ENCODE measurements at regions of chr4 and their contacts with region 1.

Region 1: GRCh38 chr4:150799207-150799606 is 215.9 kb downstream of the LRBA start:
- DNase-seq: no peak
- ATAC-seq: no peak
- H3K4me3 ChIP-seq: no peak overlapping the region
- H3K4me3 Mint-ChIP-seq: no peak overlapping the region
- H3K27ac ChIP-seq: no peak overlapping the region
- H3K27ac Mint-ChIP-seq: no peak overlapping the region
- H3K4me1 ChIP-seq: no peaks in the 10 kb centered on the region
- H3K4me1 Mint-ChIP-seq: peaks cover 0 to under 1% (median under 1%) of the 10 kb centered on the region in 3 donors
- H3K27me3 ChIP-seq: no peaks in the 10 kb centered on the region
- H3K27me3 Mint-ChIP-seq: no peaks in the 10 kb centered on the region

Region 2: DNA sequence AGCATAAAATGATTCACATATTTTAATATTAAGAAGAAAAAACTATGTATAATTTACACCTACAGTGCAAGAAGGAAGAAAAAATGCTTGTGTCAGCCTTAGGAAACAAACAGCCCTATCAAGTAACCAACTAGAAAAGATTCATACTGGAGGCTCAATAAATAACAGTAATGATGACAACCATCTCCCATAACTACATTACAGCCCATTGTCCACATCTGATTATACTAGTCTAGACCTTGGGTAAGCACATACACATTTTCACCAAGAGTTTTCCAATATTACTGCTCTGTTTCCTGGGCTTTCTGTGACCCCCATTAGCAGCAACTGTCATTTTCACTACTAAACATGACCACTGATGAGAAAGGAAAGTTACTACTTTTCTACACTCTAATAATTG is 47.6 kb before region 1 on chr4:
- CTCF ChIA-PET with region 1: no interaction called
- POLR2A ChIA-PET with region 1: interaction called in 1 of 2 experiments, 11 read pairs
- DNase-seq: no peak
- ATAC-seq: no peak
- H3K4me3 ChIP-seq: no peak overlapping the region
- H3K4me3 Mint-ChIP-seq: no peak overlapping the region
- H3K27ac ChIP-seq: no peak overlapping the region
- H3K27ac Mint-ChIP-seq: no peak overlapping the region
- H3K4me1 ChIP-seq: no peaks in the 10 kb centered on the region
- H3K4me1 Mint-ChIP-seq: peaks cover 0 to 6% (median 4%) of the 10 kb centered on the region in 3 donors
- H3K27me3 ChIP-seq: no peaks in the 10 kb centered on the region
- H3K27me3 Mint-ChIP-seq: no peaks in the 10 kb centered on the region